ENCODE measurements at regions of chr19 and their contacts with region 1.

Region 1: GRCh38 chr19:6963937-6964336 is 57.3 kb downstream of the MBD3L2B start:
- DNase-seq: peak; percentile 65
- ATAC-seq: no peak
- H3K4me3 Mint-ChIP-seq: no peak overlapping the region
- H3K27ac Mint-ChIP-seq: no peak overlapping the region
- H3K4me1 Mint-ChIP-seq: no peaks in the 10 kb centered on the region
- H3K27me3 Mint-ChIP-seq: no peaks in the 10 kb centered on the region
- CTCF ChIP-seq: peak; percentile 79

Region 2: GRCh38 chr19:6952956-6953355 is 11.0 kb before region 1 on chr19:
- CTCF ChIA-PET with region 1: interaction called, 17 read pairs
- POLR2A ChIA-PET with region 1: no interaction called
- intact Hi-C with region 1: no loop called
- DNase-seq: no peak
- ATAC-seq: no peak
- H3K4me3 Mint-ChIP-seq: no peak overlapping the region
- H3K27ac Mint-ChIP-seq: no peak overlapping the region
- H3K4me1 Mint-ChIP-seq: peaks cover 4% of the 10 kb centered on the region
- H3K27me3 Mint-ChIP-seq: no peaks in the 10 kb centered on the region
- CTCF ChIP-seq: no peak

Region 3: DNA sequence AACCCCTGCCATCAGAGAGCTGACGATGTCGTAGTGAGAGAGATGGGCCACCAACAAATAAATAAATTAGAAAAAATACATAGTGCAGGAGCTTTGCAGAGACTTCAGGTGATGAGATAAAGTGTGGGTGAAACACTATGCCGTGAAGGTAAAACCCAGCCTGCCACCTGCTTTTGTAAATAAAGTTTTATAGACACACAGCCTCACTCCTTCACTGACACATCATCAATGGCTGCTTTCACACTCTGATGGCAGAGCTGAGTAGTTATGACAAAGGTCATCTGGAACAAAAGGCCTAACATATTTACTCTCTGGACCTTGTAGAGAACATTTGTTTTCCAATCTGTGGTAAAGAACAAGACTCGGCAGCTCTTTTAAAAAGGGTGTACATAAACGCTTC is 12.3 kb after region 1 on chr19:
- CTCF ChIA-PET with region 1: interaction called, 24 read pairs
- POLR2A ChIA-PET with region 1: no interaction called
- intact Hi-C with region 1: no loop called
- DNase-seq: no peak
- ATAC-seq: no peak
- H3K4me3 Mint-ChIP-seq: no peak overlapping the region
- H3K27ac Mint-ChIP-seq: no peak overlapping the region
- H3K4me1 Mint-ChIP-seq: peaks cover 4% of the 10 kb centered on the region
- H3K27me3 Mint-ChIP-seq: no peaks in the 10 kb centered on the region
- CTCF ChIP-seq: no peak

Measured in activated CD8-positive, alpha-beta T cell treated with anti-CD3 and anti-CD28 coated beads for 36 hours (primary cell).